AG04450 (cell line): ENCODE measurements at regions of chr10 and their contacts with region 1.

Region 1: DNA sequence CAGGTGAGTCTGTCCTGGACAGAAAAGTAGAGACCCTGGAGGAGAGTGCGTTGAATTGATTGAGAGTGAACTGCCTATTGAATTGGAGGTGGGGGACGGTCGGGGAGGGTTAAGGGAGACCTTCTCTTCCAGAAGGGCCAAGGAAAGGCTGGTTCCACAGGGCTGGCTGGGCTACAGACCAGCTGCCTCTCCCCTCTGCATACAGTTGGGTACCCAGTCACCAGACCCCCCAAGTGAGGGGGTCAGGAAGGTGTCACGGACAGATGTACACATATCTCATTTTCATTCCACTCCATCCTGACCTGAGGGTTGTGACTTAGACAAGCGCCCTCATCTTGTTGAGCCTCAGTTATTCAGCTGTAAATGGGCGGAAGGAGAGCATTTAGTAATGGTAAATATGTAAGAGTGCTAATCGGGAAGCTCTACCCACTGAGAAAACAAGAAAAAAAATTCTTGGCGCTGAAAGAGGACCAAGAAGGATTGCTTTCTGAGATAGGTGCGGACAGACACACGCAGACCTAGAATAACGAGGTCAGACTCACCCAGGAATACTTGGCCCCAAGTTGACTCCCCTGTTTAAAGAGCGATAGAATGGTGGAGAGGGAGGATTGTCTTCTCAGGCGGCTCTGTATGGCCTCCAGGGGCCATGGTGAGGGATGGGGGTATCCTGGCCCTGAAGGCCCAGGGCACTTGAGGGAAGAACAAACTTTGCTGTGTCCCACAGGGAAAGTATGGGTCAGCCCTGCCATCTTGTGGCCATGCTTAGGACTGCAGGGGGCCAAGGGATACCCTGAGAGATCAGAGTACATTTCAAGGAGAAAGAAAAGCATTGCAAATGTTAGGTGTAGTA is 7.2 kb upstream of the MBL2 start:
- DNase-seq: peak; percentile 15
- H3K4me3 ChIP-seq: no peak overlapping the region
- H3K27ac ChIP-seq: no peak overlapping the region
- H3K27me3 ChIP-seq: peaks cover 12% of the 10 kb centered on the region
- CTCF ChIP-seq: peak; percentile 97

Region 2: DNA sequence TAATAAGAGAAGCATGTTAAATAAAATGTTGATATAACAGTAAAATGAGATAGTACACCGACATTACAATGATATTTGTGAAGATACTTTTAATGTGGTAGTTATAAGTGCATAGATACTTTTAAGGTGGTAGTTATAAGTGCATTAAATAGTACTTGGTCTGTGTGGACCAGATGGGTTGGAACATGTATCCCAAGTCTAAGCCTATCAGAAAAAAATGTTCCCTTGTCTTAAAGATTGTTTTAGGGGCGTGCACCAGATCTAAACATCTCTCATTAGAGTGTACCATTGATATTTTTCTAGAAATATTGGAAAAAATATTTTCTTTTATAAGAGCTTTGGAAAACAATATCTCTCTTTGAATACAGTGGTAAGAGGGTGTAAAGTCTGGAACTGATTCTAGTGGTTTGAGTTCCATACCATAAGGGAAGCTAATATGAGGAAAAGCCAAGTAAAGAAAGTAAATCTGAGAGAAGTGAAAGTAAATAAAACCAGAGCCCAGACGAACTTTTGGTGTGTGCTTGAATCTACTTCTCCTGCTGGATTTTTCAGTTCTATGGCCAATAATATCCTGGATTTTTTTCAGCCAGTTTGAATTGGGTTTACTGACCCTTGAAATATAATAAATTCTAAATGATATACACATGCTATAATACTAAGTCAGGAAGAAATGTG is 182.4 kb before region 1 on chr10:
- CTCF ChIA-PET with region 1: no interaction called
- POLR2A ChIA-PET with region 1: no interaction called
- DNase-seq: no peak
- H3K4me3 ChIP-seq: peak overlapping the region; percentile 37
- H3K27ac ChIP-seq: no peak overlapping the region
- H3K27me3 ChIP-seq: no peaks in the 10 kb centered on the region
- CTCF ChIP-seq: no peak

Region 3: GRCh38 chr10:52644373-52645186 is 135.2 kb before region 1 on chr10:
- CTCF ChIA-PET with region 1: interaction called, 75 read pairs
- POLR2A ChIA-PET with region 1: no interaction called
- DNase-seq: no peak
- H3K4me3 ChIP-seq: no peak overlapping the region
- H3K27ac ChIP-seq: no peak overlapping the region
- H3K27me3 ChIP-seq: no peaks in the 10 kb centered on the region
- CTCF ChIP-seq: peak; percentile 80

Region 4: DNA sequence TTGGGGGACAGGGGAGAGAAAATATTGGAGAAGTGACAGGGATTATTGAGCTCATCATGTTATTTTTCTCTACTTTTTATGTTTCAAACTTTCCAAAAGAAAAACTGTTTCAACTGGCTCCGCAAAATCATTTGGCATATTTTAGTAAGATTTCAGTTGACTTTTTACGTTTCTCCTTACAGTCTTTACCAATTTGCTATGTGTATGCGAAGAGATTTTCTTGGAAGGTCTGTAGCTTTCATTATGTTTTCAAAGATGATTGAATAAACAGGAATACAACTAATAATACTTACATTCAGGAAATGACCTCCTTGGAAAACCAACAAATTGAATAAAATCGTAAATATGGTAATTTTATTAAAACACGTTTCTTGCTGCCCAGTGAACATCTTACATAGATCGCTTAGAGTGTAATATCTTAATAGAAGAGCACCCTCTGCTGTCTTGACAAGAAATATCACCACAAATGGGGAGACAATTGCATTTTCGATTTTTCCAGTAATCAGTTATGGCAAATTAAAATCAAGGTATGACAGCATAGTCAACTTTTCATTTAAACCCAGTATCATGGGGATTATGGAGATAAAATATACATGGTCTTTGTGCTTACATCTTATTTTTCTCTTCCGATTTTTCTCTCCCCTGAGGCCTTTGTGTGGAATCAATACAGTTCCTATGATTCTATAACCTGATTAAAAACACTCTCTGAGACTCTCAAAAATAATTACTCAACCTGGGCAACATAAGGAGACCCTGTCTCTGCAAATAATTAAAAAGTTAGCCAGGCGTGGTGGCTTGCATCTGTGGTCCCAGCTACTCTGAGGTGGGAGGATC is 50.3 kb before region 1 on chr10:
- CTCF ChIA-PET with region 1: interaction called, 19 read pairs
- POLR2A ChIA-PET with region 1: no interaction called
- DNase-seq: no peak
- H3K4me3 ChIP-seq: no peak overlapping the region
- H3K27ac ChIP-seq: no peak overlapping the region
- H3K27me3 ChIP-seq: no peaks in the 10 kb centered on the region
- CTCF ChIP-seq: peak; percentile 56

Region 5: DNA sequence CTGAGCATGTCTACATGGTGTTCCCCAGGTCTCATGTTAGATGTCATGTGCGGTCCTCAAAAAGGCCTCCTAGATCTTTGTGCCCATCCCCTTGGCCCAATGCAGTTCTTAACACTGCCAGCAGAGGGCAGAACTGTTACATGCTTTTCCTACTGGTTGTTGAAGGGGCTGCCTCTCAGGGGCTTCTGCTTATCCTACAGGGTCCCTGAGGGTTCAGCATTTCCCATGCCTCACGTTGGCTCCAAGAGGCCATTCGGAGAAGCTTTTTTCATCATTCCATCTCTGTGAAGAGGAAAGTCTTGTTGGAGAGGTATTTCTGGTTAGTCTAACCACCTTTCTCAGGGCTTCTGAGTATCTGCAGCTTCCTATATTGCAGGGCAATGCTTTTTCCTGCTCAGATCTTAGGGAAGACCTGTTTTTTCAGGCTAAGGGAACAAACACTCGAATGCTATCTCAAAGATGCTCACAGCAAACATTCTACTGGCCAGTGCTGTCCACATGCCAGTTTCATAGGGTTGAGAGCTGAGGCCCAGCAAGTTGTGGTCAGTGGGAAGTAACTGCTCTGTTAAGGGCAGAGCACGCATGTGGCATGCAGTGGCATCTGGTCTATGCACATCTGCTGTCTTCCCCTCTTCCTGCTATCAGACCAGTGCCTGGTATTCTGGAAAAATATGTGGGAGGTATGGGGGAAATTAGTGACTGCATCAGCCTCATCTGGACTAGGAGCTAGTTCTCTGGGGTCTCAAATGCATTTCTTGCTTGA is 38.7 kb before region 1 on chr10:
- CTCF ChIA-PET with region 1: interaction called, 93 read pairs
- POLR2A ChIA-PET with region 1: no interaction called
- DNase-seq: no peak
- H3K4me3 ChIP-seq: no peak overlapping the region
- H3K27ac ChIP-seq: no peak overlapping the region
- H3K27me3 ChIP-seq: no peaks in the 10 kb centered on the region
- CTCF ChIP-seq: peak; percentile 88

Region 6: DNA sequence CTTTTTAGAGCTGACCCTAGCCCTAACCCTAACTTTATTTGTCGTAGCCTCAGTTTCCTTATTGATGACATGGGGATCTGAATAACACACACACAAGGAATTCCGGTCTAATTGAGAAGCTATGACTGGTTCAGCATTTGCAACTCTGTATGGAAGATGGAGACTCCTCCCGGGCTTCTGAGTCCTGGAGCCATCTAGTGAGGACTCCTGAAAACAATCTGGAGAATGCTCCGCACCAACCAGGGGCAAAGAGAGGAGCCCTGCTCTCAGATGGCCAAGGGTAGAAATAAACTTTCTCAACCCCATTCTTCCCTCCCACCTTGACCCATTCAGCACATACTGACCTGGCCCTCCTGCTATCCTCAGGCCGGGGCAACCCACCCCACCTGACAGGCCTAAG is 33.6 kb before region 1 on chr10:
- CTCF ChIA-PET with region 1: interaction called, 93 read pairs
- POLR2A ChIA-PET with region 1: no interaction called
- DNase-seq: no peak
- H3K4me3 ChIP-seq: no peak overlapping the region
- H3K27ac ChIP-seq: no peak overlapping the region
- H3K27me3 ChIP-seq: peaks cover 2% of the 10 kb centered on the region
- CTCF ChIP-seq: peak; percentile 62

Region 7: DNA sequence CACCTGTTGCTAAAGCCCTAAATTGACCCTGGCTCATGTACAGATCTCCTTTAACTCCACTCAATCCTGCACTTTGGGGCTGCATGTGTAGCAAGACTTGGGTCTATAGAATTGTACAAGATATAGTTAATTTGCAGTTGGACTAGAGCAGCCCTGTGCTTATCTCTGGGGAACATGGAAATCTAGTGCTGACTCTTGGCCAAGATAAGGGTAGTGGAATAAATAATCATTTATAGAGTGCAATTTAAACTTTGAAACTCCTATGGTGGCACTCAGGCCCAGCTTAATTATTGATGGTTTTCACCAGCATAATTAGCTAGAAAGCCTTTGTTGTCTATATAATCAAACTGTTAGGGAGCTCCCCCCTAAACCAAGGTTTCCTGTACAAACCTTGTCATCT is 32.0 kb after region 1 on chr10:
- CTCF ChIA-PET with region 1: no interaction called
- POLR2A ChIA-PET with region 1: no interaction called
- DNase-seq: no peak
- H3K4me3 ChIP-seq: no peak overlapping the region
- H3K27ac ChIP-seq: no peak overlapping the region
- H3K27me3 ChIP-seq: no peaks in the 10 kb centered on the region
- CTCF ChIP-seq: no peak

Region 8: DNA sequence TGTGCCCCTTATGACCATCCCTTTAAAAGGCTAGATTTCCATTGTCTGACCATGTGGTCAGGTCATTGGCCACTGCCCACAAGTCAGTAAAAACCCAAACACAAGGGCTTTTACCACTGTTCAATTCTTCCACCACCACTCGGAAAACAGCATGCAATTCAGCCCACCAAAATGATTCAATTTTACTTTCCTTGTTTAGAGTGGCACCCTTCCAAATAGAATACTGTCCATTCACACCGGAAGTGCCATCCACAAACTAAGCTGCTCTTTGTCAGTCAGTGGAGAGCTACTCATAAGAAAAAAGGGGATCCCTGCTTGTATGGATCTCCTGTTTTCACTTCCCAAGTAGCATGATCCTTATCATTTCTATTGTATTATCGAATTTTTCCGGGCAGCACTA is 343.5 kb after region 1 on chr10:
- CTCF ChIA-PET with region 1: no interaction called
- POLR2A ChIA-PET with region 1: no interaction called
- DNase-seq: no peak
- H3K4me3 ChIP-seq: no peak overlapping the region
- H3K27ac ChIP-seq: no peak overlapping the region
- H3K27me3 ChIP-seq: no peaks in the 10 kb centered on the region
- CTCF ChIP-seq: no peak